Panc1 (cell line): ENCODE measurements at regions of chr3 and their contacts with region 1.

Region 1: GRCh38 chr3:124814620-124815421 is 72.3 kb downstream of the ITGB5 start:
- DNase-seq: no peak
- ATAC-seq: no peak
- H3K4me3 ChIP-seq: no peak overlapping the region
- H3K27ac ChIP-seq: no peak overlapping the region
- H3K4me1 ChIP-seq: peaks cover 10% of the 10 kb centered on the region
- H3K27me3 ChIP-seq: no peaks in the 10 kb centered on the region
- CTCF ChIP-seq: no peak

Region 2: GRCh38 chr3:124007186-124007585 is 807.6 kb before region 1 on chr3:
- CTCF ChIA-PET with region 1: no interaction called
- POLR2A ChIA-PET with region 1: no interaction called
- in situ Hi-C with region 1: no loop called
- intact Hi-C with region 1: no loop called
- DNase-seq: no peak
- ATAC-seq: no peak
- H3K4me3 ChIP-seq: no peak overlapping the region
- H3K27ac ChIP-seq: no peak overlapping the region
- H3K4me1 ChIP-seq: no peaks in the 10 kb centered on the region
- H3K27me3 ChIP-seq: peaks cover 12% of the 10 kb centered on the region
- CTCF ChIP-seq: no peak

Region 3: DNA sequence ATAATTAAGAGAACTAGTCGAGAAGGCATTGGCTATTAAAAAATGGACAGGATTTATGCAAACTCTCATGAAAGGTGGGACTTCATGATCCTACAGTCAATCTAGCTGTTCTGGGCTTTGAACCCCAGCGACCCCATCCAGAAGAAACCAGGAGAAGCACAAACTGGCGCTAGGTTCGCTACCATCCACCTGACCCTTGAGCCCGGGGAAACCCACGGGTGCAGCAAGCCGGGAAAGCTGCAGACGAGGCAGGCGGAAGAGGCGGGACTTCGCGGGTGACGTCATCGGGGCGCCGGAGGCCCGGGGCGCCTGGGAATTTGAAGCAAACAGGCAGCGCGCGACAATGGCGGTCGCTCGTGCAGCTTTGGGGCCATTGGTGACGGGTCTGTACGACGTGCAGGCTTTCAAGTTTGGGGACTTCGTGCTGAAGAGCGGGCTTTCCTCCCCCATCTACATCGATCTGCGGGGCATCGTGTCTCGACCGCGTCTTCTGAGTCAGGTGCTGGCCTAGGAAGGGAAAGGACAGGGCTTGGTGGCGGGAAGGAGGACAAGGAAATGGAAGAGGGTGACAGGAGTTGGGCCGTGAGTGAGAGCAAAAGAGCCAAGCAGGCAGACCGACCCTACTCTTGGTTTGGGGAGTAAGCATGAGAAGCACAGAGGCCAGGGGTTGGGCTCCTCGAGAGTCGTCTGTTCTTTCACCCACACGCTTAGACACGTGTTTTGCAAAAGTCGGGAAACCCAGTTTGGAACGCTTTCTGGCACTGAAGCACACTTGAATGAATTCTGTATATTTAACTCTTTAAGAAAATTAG is 84.5 kb before region 1 on chr3 and contains the start of gene UMPS:
- CTCF ChIA-PET with region 1: no interaction called
- POLR2A ChIA-PET with region 1: interaction called, 10 read pairs
- in situ Hi-C with region 1: no loop called
- intact Hi-C with region 1: no loop called
- DNase-seq: peak; percentile 33
- ATAC-seq: peak; percentile 99
- H3K4me3 ChIP-seq: peak within 1 kb of the TSS; percentile 71 to 87
- H3K27ac ChIP-seq: peak within 1 kb of the TSS; percentile 86
- H3K4me1 ChIP-seq: peaks cover 9% of the 10 kb centered on the region; the same call in 1 of the 2 replicates
- H3K27me3 ChIP-seq: peaks cover 5% of the 10 kb centered on the region; the same call in 1 of the 2 replicates
- CTCF ChIP-seq: no peak
- total RNA-seq, gene UMPS: 46.0 TPM

Region 4: GRCh38 chr3:124741027-124741426 is 73.8 kb before region 1 on chr3:
- CTCF ChIA-PET with region 1: no interaction called
- POLR2A ChIA-PET with region 1: no interaction called
- in situ Hi-C with region 1: no loop called
- intact Hi-C with region 1: no loop called
- DNase-seq: no peak
- ATAC-seq: no peak
- H3K4me3 ChIP-seq: no peak overlapping the region
- H3K27ac ChIP-seq: no peak overlapping the region
- H3K4me1 ChIP-seq: no peaks in the 10 kb centered on the region
- H3K27me3 ChIP-seq: no peaks in the 10 kb centered on the region
- CTCF ChIP-seq: no peak